Aorta (tissue), 5 donors: ENCODE measurements at regions of chr18 and their contacts with region 1.

Region 1: GRCh38 chr18:49858309-49859020 is 45.1 kb upstream of the ACAA2 start:
- DNase-seq: peak in 1 of 2 donors; percentile 84
- ATAC-seq: no peak
- H3K4me3 ChIP-seq: no peak overlapping the region
- H3K27ac ChIP-seq: no peak overlapping the region
- H3K4me1 ChIP-seq: no peaks in the 10 kb centered on the region
- H3K27me3 ChIP-seq: no peaks in the 10 kb centered on the region

Region 2: GRCh38 chr18:49510393-49511115 is 347.9 kb before region 1 on chr18:
- intact Hi-C with region 1: loop called (anchors 2 kb)
- DNase-seq: no peak
- ATAC-seq: no peak
- H3K4me3 ChIP-seq: no peak overlapping the region
- H3K27ac ChIP-seq: no peak overlapping the region
- H3K4me1 ChIP-seq: no peaks in the 10 kb centered on the region
- H3K27me3 ChIP-seq: no peaks in the 10 kb centered on the region

Region 3: DNA sequence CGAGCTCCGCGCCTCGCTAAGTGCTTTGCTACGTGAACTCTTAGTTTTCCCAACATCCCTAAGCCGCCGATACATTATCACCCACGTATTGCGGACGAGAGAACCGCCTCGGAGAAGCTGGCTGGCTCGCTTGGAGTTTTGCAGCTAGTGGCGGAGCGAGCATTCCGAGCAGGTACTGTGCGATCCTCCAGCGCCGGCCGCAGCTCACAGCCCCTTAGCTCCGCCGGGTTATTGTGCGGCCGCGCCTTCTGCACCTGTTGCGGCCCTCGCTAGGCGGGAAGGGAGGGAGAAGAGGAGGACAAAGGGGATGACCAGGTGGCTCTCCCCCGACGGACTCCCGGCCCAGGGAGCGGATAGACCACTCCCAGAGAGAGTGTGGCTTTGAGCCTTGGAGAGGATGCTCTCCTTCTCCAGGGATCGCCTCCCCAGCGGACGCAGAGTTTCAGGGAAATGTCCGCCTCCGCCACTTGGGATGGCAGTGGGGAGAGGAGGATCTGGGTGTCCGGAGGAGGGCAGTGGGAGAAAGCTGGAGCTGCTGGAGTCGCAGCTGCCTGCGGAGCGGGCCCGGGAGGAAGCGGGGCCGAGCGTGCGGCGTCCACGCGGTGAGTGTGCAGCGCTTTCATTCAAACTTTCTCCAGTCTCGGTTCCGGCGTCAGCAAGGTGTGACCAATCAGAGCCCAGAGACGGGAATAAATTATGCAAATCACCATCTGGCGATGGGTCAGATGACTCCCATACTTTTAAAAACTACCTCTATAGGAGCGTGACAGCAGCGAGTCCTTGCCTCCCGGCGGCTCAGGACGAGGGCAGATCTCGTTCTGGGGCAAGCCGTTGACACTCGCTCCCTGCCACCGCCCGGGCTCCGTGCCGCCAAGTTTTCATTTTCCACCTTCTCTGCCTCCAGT is 296.9 kb before region 1 on chr18 and contains the start of gene LIPG:
- intact Hi-C with region 1: loop called in 1 of 2 experiments (anchors 5 kb)
- DNase-seq: peak in 1 of 2 donors; percentile 47
- ATAC-seq: peak; percentile 43
- H3K4me3 ChIP-seq: peak within 1 kb of the TSS; percentile 12 to 40
- H3K27ac ChIP-seq: no peak within 1 kb of the TSS
- H3K4me1 ChIP-seq: no peaks in the 10 kb centered on the region
- H3K27me3 ChIP-seq: no peaks in the 10 kb centered on the region
- total RNA-seq, gene LIPG: 9.1 to 23.7 TPM

Region 4: GRCh38 chr18:49677762-49678413 is 180.6 kb before region 1 on chr18:
- intact Hi-C with region 1: no loop called
- DNase-seq: no peak
- ATAC-seq: no peak
- H3K4me3 ChIP-seq: no peak overlapping the region
- H3K27ac ChIP-seq: no peak overlapping the region
- H3K4me1 ChIP-seq: no peaks in the 10 kb centered on the region
- H3K27me3 ChIP-seq: no peaks in the 10 kb centered on the region

Region 5: GRCh38 chr18:49997558-49997957 is 139.1 kb after region 1 on chr18:
- intact Hi-C with region 1: no loop called
- DNase-seq: no peak
- ATAC-seq: no peak
- H3K4me3 ChIP-seq: no peak overlapping the region
- H3K27ac ChIP-seq: no peak overlapping the region
- H3K4me1 ChIP-seq: no peaks in the 10 kb centered on the region
- H3K27me3 ChIP-seq: no peaks in the 10 kb centered on the region